Vagina (tissue), 2 donors: ENCODE measurements at regions of chr3 and their contacts with region 1.

Region 1: GRCh38 chr3:167521006-167521355 is 47.1 kb upstream of the SERPINI2 start:
- DNase-seq: no peak
- H3K4me3 ChIP-seq: no peak overlapping the region
- H3K27ac ChIP-seq: no peak overlapping the region
- H3K4me1 ChIP-seq: no peaks in the 10 kb centered on the region
- H3K27me3 ChIP-seq: no peaks in the 10 kb centered on the region
- CTCF ChIP-seq: no peak
- POLR2A ChIP-seq: no peak

Region 2: GRCh38 chr3:167209021-167209420 is 312.0 kb before region 1 on chr3:
- intact Hi-C with region 1: no loop called
- DNase-seq: no peak
- H3K4me3 ChIP-seq: no peak overlapping the region
- H3K27ac ChIP-seq: no peak overlapping the region
- H3K4me1 ChIP-seq: no peaks in the 10 kb centered on the region
- H3K27me3 ChIP-seq: no peaks in the 10 kb centered on the region
- CTCF ChIP-seq: no peak
- POLR2A ChIP-seq: no peak

Region 3: DNA sequence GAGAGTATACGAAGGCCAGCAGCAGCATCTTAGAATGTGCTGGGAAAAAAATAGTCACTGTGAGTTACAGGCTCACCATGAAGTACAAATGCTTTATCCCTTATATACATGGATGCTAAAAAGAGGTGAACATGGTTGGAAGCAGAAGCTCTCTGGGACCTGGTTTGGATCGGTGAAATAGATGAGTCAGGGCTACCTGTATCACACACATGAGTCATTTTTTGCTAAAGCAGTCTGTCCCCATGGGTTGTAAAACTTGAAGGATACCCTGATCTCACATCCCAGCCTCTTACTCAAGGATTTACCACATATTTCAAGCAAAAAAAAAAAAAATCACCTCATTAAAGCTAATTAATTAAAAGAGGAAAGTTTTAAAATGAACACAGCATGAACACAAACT is 40.2 kb before region 1 on chr3:
- intact Hi-C with region 1: no loop called
- DNase-seq: no peak
- H3K4me3 ChIP-seq: no peak overlapping the region
- H3K27ac ChIP-seq: no peak overlapping the region
- H3K4me1 ChIP-seq: no peaks in the 10 kb centered on the region
- H3K27me3 ChIP-seq: no peaks in the 10 kb centered on the region
- CTCF ChIP-seq: no peak
- POLR2A ChIP-seq: no peak

Region 4: DNA sequence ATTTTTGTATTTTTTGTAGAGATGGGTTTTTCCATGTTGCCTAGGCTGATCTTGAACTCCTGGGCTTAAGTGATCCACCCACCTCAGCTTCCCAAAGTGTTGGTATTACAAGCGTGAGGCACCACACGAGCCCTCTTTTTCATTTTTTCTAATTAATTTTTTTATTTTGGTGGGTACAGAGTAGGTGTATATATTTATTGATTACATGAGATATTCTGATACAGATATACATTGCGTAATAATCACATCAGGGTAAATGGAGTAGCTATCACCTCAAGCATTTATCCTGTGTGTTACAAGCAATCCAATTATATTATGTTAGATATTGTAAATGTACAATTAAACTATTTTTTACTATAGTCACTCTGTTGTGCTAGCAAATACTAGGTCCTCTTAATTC is 66.7 kb after region 1 on chr3:
- intact Hi-C with region 1: loop called (anchors 5 kb)
- DNase-seq: no peak
- H3K4me3 ChIP-seq: no peak overlapping the region
- H3K27ac ChIP-seq: no peak overlapping the region
- H3K4me1 ChIP-seq: no peaks in the 10 kb centered on the region
- H3K27me3 ChIP-seq: no peaks in the 10 kb centered on the region
- CTCF ChIP-seq: no peak
- POLR2A ChIP-seq: no peak